GM10248 (cell line): ENCODE measurements at regions of chr2 and their contacts with region 1.

Region 1: GRCh38 chr2:8737571-8738175 is 55.8 kb downstream of the ID2 start:
- DNase-seq: no peak
- CTCF ChIP-seq: no peak

Region 2: DNA sequence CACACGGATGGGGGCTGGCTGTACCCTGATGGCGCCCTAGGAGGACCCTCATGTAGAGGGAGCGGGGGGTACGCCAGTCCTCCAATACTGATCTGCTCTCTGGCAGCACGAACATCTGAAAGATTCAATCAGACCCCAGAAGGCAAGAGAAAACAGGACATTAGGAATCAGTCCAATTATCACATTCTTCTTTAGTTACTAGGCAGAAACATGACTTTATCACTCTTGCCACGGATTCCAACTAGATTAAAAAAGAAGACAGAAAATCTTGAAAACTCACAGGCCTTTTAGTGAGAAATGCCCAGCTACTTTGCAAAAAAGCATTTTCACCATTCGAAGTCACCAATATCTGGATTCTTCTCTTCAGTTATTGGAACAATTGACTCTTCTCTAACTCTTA is 12.5 kb after region 1 on chr2:
- CTCF ChIA-PET with region 1: interaction called, 13 read pairs
- POLR2A ChIA-PET with region 1: no interaction called
- DNase-seq: no peak
- CTCF ChIP-seq: no peak

Region 3: GRCh38 chr2:8836971-8837794 is 99.5 kb after region 1 on chr2 and contains the start of gene KIDINS220:
- CTCF ChIA-PET with region 1: no interaction called
- POLR2A ChIA-PET with region 1: no interaction called
- DNase-seq: peak; percentile 99
- CTCF ChIP-seq: no peak

Region 4: GRCh38 chr2:8851811-8852560 is 114.3 kb after region 1 on chr2:
- CTCF ChIA-PET with region 1: no interaction called
- POLR2A ChIA-PET with region 1: no interaction called
- DNase-seq: no peak
- CTCF ChIP-seq: no peak